ENCODE measurements at regions of chr13 and their contacts with region 1.

Region 1: DNA sequence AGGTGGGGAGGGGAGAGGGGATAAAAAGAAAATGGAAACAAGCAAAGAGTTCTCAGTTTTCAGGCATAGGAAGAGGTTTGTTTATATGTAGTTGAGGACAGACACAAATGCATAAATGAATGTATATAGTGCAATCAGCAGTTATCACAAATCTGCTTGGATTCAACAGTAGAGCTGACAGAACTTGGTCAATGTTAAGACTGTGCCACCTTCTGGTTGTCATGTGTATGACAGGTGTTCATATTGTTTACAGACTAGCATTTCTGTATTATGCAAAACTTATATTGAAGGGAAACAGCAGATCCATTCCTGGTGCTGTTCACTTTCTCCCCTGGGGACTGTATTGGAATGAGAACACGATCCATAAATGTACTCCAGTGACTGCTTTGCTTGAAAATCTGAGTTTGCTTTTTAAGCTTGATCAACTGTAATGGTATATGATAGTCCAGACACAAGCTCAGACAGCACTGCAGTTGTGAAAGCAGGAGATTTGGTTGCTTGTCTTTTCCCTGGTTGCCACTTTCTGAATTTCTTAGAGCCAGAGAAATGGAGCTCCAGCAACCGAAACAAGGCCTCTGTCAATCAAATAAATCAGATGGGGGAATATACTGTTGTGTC is 319.5 kb upstream of the OBI1 start:
- DNase-seq: peak; percentile 16 to 70 (median 54)
- H3K4me3 ChIP-seq: no peak overlapping the region
- H3K27ac ChIP-seq: no peak overlapping the region
- H3K4me1 ChIP-seq: no peaks in the 10 kb centered on the region
- H3K27me3 ChIP-seq: peaks cover 6% of the 10 kb centered on the region
- CTCF ChIP-seq: peak; percentile 44 to 79 (median 70)
- POLR2A ChIP-seq: no peak

Region 2: GRCh38 chr13:78137404-78138142 is 840.9 kb before region 1 on chr13:
- intact Hi-C with region 1: loop called (anchors 5 to 10 kb)
- DNase-seq: peak in 6 of 7 donors; percentile 16 to 54 (median 20)
- H3K4me3 ChIP-seq: no peak overlapping the region
- H3K27ac ChIP-seq: no peak overlapping the region
- H3K4me1 ChIP-seq: no peaks in the 10 kb centered on the region
- H3K27me3 ChIP-seq: no peaks in the 10 kb centered on the region
- CTCF ChIP-seq: peak; percentile 35 to 72 (median 62)
- POLR2A ChIP-seq: no peak

Region 3: DNA sequence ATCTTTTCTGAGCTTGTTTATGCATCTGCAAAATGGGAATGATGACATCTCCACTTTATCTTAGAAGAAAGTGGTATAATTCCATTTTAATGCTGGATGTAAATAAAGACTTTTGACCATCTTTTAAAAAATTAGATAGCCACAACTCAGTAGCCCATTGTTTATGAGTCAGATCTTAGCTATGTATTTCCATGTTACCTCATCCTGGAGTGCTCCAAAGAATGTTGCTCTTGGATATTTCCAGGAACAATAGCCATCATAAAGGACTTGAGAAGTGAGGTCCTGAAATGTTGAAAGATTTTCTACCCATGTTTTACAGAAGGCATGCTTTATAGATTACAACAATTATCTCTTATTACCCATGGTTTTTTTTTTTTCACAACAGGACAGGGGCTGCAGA is 830.6 kb before region 1 on chr13:
- intact Hi-C with region 1: loop called in 1 of 2 experiments (anchors 10 kb)
- DNase-seq: no peak
- H3K4me3 ChIP-seq: no peak overlapping the region
- H3K27ac ChIP-seq: no peak overlapping the region
- H3K4me1 ChIP-seq: no peaks in the 10 kb centered on the region
- H3K27me3 ChIP-seq: no peaks in the 10 kb centered on the region
- CTCF ChIP-seq: no peak
- POLR2A ChIP-seq: no peak

Measured in adrenal gland (tissue), 19 donors.